ENCODE measurements at regions of chr1 and their contacts with region 1.

Region 1: GRCh38 chr1:225777583-225778336 is at the start of gene SRP9:
- DNase-seq: peak; percentile 100
- total RNA-seq, gene SRP9: 167 to 207 TPM

Region 2: GRCh38 chr1:225554216-225554812 is 223.4 kb before region 1 on chr1:
- intact Hi-C with region 1: loop called in 1 of 2 experiments (anchors 10 kb)
- DNase-seq: no peak

Region 3: GRCh38 chr1:225845571-225846259 is 68.0 kb after region 1 on chr1:
- intact Hi-C with region 1: loop called (anchors 2 to 5 kb)
- DNase-seq: peak; percentile 94

Region 4: DNA sequence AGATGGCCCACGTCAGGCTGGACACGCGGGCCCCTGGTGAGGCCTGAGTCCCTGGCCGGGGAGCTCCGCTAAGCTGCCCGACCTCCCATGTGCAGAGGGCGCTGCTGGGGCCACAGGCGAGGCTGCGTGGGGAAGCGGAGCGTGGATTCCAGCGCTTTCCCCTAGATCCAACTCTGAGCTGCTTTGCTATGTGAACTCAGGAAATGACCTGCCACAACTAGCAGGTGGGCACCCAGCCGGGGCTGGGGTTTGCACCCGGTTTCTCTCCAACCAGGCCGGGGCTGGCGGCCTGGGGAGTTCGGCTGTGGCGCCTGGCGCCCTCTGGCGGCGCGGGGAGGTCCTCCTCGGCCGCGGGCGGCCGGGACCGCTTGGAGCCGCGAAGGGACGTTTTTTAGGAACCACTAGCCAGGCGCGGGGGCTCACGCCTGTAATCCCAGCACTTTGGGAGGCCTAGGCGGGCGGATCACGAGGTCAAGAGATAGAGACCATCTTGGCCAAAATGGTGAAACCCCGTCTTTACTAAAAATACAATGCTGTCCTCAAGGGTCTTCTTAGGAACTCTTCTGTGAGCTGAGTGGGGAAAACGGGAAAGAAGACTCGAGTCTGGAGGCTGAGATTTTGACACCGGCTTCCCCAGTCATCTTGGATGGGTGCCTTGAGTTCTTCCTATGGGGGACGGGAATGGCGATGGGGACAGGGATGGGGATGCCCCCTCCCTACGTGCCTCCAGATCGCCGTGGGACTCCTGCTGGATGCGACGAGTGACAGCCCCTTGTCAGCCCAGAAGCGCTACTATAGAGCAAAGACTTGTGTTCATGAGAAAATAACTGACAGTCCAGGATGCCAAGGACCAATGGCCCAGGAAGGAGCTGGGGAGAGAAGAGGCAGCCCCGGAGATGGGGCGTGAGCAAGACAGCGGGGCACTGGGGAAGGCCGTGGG is 133.7 kb after region 1 on chr1:
- intact Hi-C with region 1: loop called (anchors 5 to 10 kb)
- DNase-seq: peak; percentile 90

Region 5: DNA sequence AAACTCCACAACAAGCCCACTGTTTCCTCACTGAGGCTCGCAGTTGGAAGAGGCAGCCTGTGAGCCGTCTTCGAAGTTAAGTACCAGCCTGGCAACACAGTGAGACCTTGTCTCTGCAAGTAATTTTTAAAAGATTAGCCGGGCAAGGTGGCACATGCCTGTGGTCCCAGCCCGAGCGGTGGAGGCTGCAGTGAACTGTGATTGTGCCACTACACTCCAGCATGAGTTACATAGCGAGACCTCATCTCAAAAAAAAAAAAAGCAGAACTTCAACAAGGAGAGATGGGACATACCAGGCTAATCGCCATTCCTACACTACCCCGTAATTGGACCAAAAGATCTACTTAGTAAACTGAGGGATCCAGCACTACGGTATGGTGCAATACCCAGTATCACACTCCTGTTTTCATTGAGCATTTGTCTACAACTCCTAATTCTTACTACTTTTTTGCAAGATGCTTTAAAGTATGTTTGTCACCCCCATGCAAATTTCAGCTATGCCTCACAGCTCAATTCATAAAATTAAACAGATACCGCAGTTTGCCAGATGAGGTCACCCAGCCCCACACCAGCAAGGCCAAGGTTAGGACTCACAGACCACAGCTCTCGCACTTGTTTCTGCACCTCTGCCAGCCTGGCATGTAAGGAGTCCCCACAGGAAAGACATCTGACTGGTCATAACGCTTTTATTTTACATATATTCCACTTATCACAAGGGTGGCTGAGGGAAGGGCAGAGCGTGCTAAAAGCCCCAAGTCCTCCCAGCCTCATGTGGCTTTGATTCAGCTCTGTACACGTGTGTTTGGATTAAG is 200.4 kb after region 1 on chr1:
- intact Hi-C with region 1: loop called in 1 of 2 experiments (anchors 10 kb)
- DNase-seq: no peak

Measured in posterior vena cava (tissue), 2 donors.